H1 (cell line): ENCODE measurements at regions of chr3 and their contacts with region 1.

Region 1: DNA sequence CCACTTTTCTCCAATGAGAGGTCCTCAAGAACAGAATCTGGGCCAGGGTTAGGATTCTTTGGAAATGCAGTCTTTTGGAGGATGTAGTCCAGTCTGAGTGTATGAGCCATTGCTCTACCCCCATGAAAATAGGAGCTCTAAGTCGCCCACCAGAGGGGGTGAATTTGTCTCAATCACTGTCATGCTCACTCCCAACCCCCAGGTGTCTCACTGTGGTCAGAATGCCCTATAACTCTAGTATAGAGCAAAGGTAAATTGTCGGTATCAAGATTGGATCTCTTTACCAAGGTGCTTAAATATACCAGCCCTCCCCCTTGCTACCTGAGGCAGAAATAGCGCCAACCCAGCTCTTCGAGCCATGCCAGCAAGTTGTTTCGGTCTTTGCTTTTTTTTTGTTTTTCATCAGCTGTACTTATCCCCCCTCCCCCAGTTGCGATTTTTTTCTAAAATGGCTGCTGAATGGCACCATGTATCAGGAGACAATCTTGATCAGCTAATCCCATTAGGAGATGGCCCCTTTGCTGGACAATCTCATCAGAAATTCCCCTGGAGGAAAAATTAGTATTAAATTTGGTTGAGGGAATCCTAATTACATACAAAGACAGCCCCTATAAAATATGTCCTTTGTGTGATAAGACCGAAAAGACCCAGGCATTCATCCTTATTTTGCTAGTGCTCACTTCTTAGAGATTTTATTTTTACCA is 130.7 kb downstream of the EBLN2 start:
- DNase-seq: peak; percentile 29 to 66
- H3K4me3 ChIP-seq: no peak overlapping the region
- H3K27ac ChIP-seq: no peak overlapping the region
- H3K4me1 ChIP-seq: no peaks in the 10 kb centered on the region
- H3K27me3 ChIP-seq: no peaks in the 10 kb centered on the region
- CTCF ChIP-seq: peak; percentile 64 to 99 (median 85)
- EP300 ChIP-seq: no peak
- POLR2A ChIP-seq: no peak
- RAD21 ChIP-seq: peak; percentile 67 to 75

Region 2: GRCh38 chr3:73056014-73056844 is 136.0 kb before region 1 on chr3:
- CTCF ChIA-PET with region 1: no interaction called
- POLR2A ChIA-PET with region 1: no interaction called
- DNase-seq: no peak
- H3K4me3 ChIP-seq: no peak overlapping the region
- H3K27ac ChIP-seq: no peak overlapping the region
- H3K4me1 ChIP-seq: no peaks in the 10 kb centered on the region
- H3K27me3 ChIP-seq: no peaks in the 10 kb centered on the region
- CTCF ChIP-seq: peak in 2 of 3 experiments; percentile 6 to 26; a peak in 2 of 4 replicates
- EP300 ChIP-seq: no peak
- POLR2A ChIP-seq: no peak
- RAD21 ChIP-seq: peak; percentile 62 to 64

Region 3: GRCh38 chr3:73175698-73176097 is 16.5 kb before region 1 on chr3:
- CTCF ChIA-PET with region 1: interaction called, 43 read pairs
- POLR2A ChIA-PET with region 1: no interaction called
- DNase-seq: no peak
- H3K4me3 ChIP-seq: no peak overlapping the region
- H3K27ac ChIP-seq: no peak overlapping the region
- H3K4me1 ChIP-seq: peaks cover 0 to 10% (median 6%) of the 10 kb centered on the region in 4 experiments; a peak in 4 of 7 replicates
- H3K27me3 ChIP-seq: no peaks in the 10 kb centered on the region
- CTCF ChIP-seq: no peak
- EP300 ChIP-seq: no peak
- POLR2A ChIP-seq: no peak
- RAD21 ChIP-seq: no peak

Region 4: GRCh38 chr3:73206022-73206421 is 13.8 kb after region 1 on chr3:
- CTCF ChIA-PET with region 1: interaction called, 14 read pairs
- POLR2A ChIA-PET with region 1: interaction called, 4 read pairs
- DNase-seq: no peak
- H3K4me3 ChIP-seq: no peak overlapping the region
- H3K27ac ChIP-seq: no peak overlapping the region
- H3K4me1 ChIP-seq: peaks cover 0 to 4% (median 2%) of the 10 kb centered on the region in 4 experiments; a peak in 2 of 7 replicates
- H3K27me3 ChIP-seq: no peaks in the 10 kb centered on the region
- CTCF ChIP-seq: no peak
- EP300 ChIP-seq: no peak
- POLR2A ChIP-seq: no peak
- RAD21 ChIP-seq: no peak

Region 5: GRCh38 chr3:73212683-73213082 is 20.5 kb after region 1 on chr3:
- CTCF ChIA-PET with region 1: interaction called, 14 read pairs
- POLR2A ChIA-PET with region 1: no interaction called
- DNase-seq: no peak
- H3K4me3 ChIP-seq: no peak overlapping the region
- H3K27ac ChIP-seq: no peak overlapping the region
- H3K4me1 ChIP-seq: no peaks in the 10 kb centered on the region
- H3K27me3 ChIP-seq: no peaks in the 10 kb centered on the region
- CTCF ChIP-seq: no peak
- EP300 ChIP-seq: no peak
- POLR2A ChIP-seq: no peak
- RAD21 ChIP-seq: no peak

Region 6: DNA sequence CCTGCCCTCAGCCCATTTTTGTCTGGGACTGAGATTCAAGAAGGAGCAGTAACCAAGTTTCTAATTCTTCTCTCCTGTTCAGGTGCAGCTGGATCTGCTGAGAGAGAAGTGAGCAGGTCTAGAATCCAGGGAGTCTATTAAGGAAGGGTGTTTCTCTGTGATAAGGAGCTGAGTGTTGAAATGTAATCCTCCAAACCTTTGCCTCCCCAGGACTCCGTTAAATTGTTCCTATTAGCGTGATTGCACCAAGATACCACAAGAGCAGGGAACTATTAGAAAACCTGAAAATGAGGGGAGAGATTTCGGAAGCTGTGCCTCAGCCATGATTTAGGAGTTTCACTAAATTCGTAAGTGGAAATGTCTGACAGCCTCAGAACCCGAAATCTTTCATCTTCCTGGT is 61.9 kb after region 1 on chr3:
- CTCF ChIA-PET with region 1: interaction called, 12 read pairs
- POLR2A ChIA-PET with region 1: no interaction called
- DNase-seq: no peak
- H3K4me3 ChIP-seq: no peak overlapping the region
- H3K27ac ChIP-seq: no peak overlapping the region
- H3K4me1 ChIP-seq: peaks cover 0 to 5% (median 0%) of the 10 kb centered on the region in 4 experiments; a peak in 2 of 7 replicates
- H3K27me3 ChIP-seq: no peaks in the 10 kb centered on the region
- CTCF ChIP-seq: no peak
- EP300 ChIP-seq: no peak
- POLR2A ChIP-seq: no peak
- RAD21 ChIP-seq: no peak

Region 7: GRCh38 chr3:73259856-73260255 is 67.7 kb after region 1 on chr3:
- CTCF ChIA-PET with region 1: interaction called, 12 read pairs
- POLR2A ChIA-PET with region 1: no interaction called
- DNase-seq: no peak
- H3K4me3 ChIP-seq: no peak overlapping the region
- H3K27ac ChIP-seq: no peak overlapping the region
- H3K4me1 ChIP-seq: peaks cover 0 to 5% (median 0%) of the 10 kb centered on the region in 4 experiments; a peak in 2 of 7 replicates
- H3K27me3 ChIP-seq: no peaks in the 10 kb centered on the region
- CTCF ChIP-seq: no peak
- EP300 ChIP-seq: no peak
- POLR2A ChIP-seq: no peak
- RAD21 ChIP-seq: no peak

Region 8: DNA sequence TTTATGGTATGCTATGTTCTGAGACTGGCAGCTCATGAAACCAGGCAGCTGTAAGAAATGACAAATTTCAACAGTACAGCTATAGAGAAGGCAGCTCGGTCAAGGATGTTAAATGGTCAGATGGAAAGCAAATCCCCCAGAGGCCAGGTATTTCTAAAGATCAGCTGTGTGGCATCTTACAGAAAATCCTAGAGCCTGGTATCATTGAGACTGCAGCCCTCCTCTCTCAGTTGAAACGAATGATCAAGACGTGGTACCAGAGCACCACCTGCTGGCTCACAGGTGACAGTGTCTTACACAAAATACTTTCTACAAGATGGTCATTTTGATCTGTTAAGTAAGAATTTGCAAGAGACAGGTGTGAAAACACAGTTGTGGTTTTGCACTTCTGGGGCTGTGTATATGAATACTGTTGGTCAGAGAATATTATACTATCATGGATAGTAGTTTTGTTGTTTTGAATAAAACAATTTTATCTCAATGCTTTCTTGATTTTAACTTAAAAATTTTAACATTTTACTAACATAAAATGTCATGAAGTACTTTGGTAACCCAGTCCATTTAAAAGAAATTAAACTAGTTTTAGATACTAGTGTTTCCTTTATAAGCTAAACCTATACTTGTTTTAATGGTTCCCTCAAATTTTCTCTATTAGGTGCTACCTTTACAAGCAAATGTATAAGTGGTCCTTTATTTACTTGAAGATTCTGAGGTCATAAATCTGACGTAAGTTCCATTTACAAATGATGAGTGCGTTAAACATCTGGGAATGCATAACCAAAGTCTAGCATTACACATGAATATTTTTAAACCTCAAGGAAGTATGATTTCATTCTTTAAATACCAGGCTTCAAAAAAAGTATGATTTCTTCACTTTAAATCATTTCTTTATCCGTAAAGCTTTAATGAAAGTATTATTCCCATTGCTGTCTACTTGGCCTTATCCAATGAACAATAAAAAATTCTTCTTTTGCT is 310.7 kb after region 1 on chr3:
- CTCF ChIA-PET with region 1: interaction called, 35 read pairs
- POLR2A ChIA-PET with region 1: no interaction called
- DNase-seq: no peak
- H3K4me3 ChIP-seq: no peak overlapping the region
- H3K27ac ChIP-seq: no peak overlapping the region
- H3K4me1 ChIP-seq: 0 out of 7 replicates have a peak, but pooled peaks cover 0 to 1% (median 0%) of the 10 kb centered on the region in 4 experiments
- H3K27me3 ChIP-seq: no peaks in the 10 kb centered on the region
- CTCF ChIP-seq: peak; percentile 48 to 93 (median 91)
- EP300 ChIP-seq: no peak
- POLR2A ChIP-seq: no peak
- RAD21 ChIP-seq: peak; percentile 99